HEK293 (cell line): ENCODE measurements at regions of chr20 and their contacts with region 1.

Region 1: GRCh38 chr20:35454881-35455609 is at the start of gene CEP250:
- H3K4me3 ChIP-seq: peak within 1 kb of the TSS; percentile 72
- H3K27ac ChIP-seq: peak within 1 kb of the TSS; percentile 92
- H3K4me1 ChIP-seq: no peaks in the 10 kb centered on the region
- CTCF ChIP-seq: no peak

Region 2: GRCh38 chr20:35303735-35304491 is 151.1 kb before region 1 on chr20:
- CTCF ChIA-PET with region 1: interaction called, 90 read pairs
- POLR2A ChIA-PET with region 1: interaction called, 15 read pairs
- H3K4me3 ChIP-seq: no peak overlapping the region
- H3K27ac ChIP-seq: no peak overlapping the region
- H3K4me1 ChIP-seq: no peaks in the 10 kb centered on the region; the same call in 1 of the 2 replicates
- CTCF ChIP-seq: peak; percentile 86

Region 3: GRCh38 chr20:35398660-35399144 is 56.3 kb before region 1 on chr20:
- CTCF ChIA-PET with region 1: interaction called, 3 read pairs
- POLR2A ChIA-PET with region 1: interaction called, 16 read pairs
- H3K4me3 ChIP-seq: no peak overlapping the region
- H3K27ac ChIP-seq: no peak overlapping the region
- H3K4me1 ChIP-seq: peaks cover 2% of the 10 kb centered on the region; the same call in 1 of the 2 replicates
- CTCF ChIP-seq: no peak

Region 4: DNA sequence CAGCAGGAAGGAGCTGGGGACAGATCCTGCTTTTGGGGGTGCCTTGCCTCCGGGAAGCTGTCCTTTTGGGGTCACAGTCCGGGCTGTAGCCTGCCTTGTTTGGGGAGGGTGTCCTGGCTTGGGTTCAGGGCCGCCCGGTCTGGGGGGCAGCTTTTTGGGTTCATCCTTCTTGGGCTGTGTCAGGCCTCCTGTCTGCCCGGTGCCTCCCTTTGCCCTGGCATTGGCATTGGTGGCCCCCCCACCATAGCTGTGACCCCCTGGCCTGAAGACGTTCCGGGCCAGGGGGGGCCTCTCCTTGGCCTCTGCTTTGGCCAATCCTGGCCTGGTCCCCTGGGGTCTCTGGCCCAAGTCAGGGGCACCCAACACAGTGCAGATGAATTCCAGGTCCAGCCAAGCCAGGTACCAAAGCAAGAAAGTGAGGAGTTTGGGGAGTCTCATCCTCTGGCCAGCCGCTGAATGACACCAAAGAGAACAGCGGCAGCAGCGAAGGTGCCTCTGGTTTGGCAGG is 17.5 kb before region 1 on chr20:
- CTCF ChIA-PET with region 1: interaction called, 12 read pairs
- POLR2A ChIA-PET with region 1: interaction called, 10 read pairs
- H3K4me3 ChIP-seq: no peak overlapping the region
- H3K27ac ChIP-seq: no peak overlapping the region; the same call in 1 of the 2 replicates
- H3K4me1 ChIP-seq: peaks cover 9% of the 10 kb centered on the region
- CTCF ChIP-seq: no peak

Region 5: DNA sequence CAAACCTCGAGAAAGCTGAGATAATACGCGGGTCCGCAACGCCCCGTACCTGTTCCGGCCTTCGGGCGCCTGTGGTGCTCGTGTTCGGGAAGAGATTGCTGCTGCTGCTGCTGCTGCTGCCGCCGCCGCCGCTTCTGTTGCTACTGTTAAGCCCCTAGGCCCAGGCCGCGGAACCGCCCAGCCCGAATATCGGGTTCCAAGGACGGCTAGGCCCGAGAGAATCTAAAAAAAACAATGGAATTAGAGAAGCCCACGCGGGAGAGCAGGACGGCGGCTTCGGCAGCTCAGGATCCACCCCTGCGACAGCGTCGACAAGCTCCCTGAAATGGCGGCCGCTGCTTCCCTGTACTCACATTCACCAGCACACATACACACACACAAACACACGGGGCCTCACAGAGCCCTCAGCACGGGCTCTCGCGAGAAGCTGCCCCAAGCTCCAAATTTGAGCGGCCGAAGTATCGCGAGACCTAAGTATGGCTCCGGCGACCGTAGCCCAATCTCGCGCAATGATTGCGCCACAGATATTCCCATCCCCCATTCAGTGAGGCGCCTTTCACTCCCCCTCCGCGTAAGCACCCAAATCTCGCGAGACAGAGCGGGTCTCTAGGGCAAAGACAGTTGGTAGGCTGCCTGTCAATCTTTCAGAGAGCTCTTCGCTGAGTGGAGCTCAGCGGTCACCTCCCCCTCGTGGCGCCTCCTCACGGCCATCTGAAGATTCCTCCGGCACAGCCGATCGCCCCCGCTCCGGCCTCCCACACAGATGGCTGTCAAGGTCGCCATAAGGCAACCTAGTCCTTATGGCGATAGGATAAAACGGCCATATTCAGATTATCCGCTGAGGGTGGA is 287.1 kb after region 1 on chr20 and contains the start of gene RBM39:
- CTCF ChIA-PET with region 1: no interaction called
- POLR2A ChIA-PET with region 1: interaction called, 11 read pairs
- H3K4me3 ChIP-seq: peak within 1 kb of the TSS; percentile 91
- H3K27ac ChIP-seq: peak within 1 kb of the TSS; percentile 100
- H3K4me1 ChIP-seq: no peaks in the 10 kb centered on the region
- CTCF ChIP-seq: peak; percentile 91